SK-N-SH (cell line): ENCODE measurements at regions of chr4 and their contacts with region 1.

Region 1: GRCh38 chr4:42519803-42520417 is 122.6 kb downstream of the SHISA3 start:
- DNase-seq: peak; percentile 25
- H3K4me3 ChIP-seq: no peak overlapping the region
- H3K27ac ChIP-seq: no peak overlapping the region
- H3K4me1 ChIP-seq: peaks cover 0 to under 1% of the 10 kb centered on the region in 2 experiments; a peak in 1 of 4 replicates
- H3K27me3 ChIP-seq: no peaks in the 10 kb centered on the region
- CTCF ChIP-seq: peak; percentile 74
- EP300 ChIP-seq: no peak
- RAD21 ChIP-seq: peak; percentile 93

Region 2: DNA sequence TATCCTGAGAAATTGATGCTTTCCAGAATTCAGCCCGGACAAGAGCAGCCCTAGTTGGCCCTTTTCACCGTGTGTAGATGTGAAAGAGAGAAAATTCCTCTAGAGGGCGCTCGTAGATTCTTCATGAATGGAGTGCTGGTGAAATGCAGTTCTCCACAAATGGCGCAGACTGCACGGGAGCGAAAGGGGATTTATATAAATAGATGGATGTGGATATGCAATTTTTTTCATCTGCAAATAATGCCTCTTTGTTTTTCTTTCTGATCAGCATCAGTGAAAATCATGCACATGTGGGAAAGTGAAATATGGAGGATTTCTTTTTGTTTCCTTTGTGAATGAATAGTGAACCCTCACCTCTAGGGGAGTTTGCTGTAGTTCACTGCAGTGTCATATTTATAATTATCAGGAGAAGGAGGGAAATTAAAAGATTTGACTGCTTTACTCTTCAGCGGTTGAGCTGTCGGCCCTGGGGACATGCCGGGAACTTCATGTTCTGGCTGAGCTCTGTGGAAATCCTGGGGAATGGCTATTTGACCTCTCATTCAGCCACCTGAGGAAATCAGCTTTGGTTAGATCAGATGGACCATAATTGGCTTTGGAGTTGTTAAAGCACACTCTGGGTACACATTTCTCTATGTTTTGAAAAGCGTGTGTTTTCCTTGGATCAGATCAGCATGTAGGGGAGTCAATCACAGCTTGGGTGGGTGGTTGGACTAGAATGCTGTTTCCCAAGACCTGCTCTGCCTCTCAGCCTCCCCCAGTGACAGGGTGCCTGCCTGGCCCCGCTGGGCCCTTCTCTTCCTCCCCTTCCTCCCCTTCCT is 237.6 kb before region 1 on chr4:
- CTCF ChIA-PET with region 1: interaction called, 109 read pairs
- POLR2A ChIA-PET with region 1: interaction called, 3 read pairs
- DNase-seq: peak; percentile 81
- H3K4me3 ChIP-seq: peak overlapping the region in 1 of 2 experiments; percentile 12; a peak in 1 of 4 replicates
- H3K27ac ChIP-seq: peak overlapping the region in 1 of 2 experiments; percentile 36; a peak in 1 of 4 replicates
- H3K4me1 ChIP-seq: peaks cover 0 to 13% of the 10 kb centered on the region in 2 experiments; a peak in 3 of 4 replicates
- H3K27me3 ChIP-seq: no peaks in the 10 kb centered on the region
- CTCF ChIP-seq: peak; percentile 80
- EP300 ChIP-seq: no peak
- RAD21 ChIP-seq: peak; percentile 96

Region 3: DNA sequence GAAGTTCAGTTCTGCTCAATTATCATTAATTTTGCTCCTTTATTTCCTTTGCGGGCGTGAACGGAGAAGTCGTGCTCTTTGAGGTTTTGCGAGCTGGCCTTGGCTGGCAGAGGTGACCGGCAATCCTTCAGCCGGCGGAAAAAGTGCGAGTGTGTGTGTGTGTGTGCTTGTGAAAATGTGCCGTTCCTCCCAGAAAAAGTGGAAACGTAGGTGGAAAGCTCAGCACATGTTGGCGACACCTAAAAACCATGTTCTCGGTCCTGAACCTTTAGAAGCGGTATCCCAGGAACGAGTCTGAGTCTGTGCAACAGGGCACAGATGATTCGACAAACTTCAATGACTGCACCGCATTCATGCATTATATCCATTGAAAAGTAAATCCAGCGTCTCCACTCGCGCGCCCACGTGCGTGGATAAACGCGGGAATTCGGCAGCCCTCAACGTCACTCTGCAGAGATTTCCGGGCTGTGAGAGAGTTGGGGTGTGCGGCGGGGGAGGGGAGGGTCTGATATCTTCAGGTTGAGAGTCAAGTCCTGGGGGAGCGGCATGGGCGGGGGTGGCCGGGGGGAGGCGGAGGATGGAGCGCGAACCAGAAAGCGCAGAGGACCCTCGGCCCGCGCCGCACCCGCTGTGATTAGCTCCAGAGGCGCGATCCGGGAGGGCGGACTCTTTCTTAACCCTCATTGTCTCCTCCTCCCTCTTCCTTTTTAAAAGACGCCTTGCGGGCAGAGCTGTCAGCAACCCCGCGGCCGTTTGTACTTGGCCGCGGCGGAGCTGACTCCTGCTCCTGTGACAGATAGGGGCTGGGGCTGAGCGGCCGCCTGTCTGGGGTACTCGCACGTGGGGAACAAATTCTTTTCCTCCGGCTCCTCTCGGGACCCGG is 122.9 kb before region 1 on chr4 and contains the start of gene SHISA3:
- CTCF ChIA-PET with region 1: interaction called, 53 read pairs
- POLR2A ChIA-PET with region 1: no interaction called
- DNase-seq: peak; percentile 71
- H3K4me3 ChIP-seq: peak within 1 kb of the TSS; percentile 58 to 60
- H3K27ac ChIP-seq: no peak within 1 kb of the TSS
- H3K4me1 ChIP-seq: peaks cover 0 to 21% of the 10 kb centered on the region in 2 experiments; a peak in 2 of 4 replicates
- H3K27me3 ChIP-seq: peaks cover 23% of the 10 kb centered on the region
- CTCF ChIP-seq: no peak
- EP300 ChIP-seq: no peak
- RAD21 ChIP-seq: no peak
- polyA plus RNA-seq, gene SHISA3: 1.1 and 1.6 TPM in 2 replicates

Region 4: GRCh38 chr4:42501624-42502401 is 18.1 kb before region 1 on chr4:
- CTCF ChIA-PET with region 1: interaction called, 13 read pairs
- POLR2A ChIA-PET with region 1: no interaction called
- DNase-seq: no peak
- H3K4me3 ChIP-seq: no peak overlapping the region
- H3K27ac ChIP-seq: peak overlapping the region in 1 of 2 experiments; percentile 71; a peak in 2 of 4 replicates
- H3K4me1 ChIP-seq: peaks cover 0 to 9% of the 10 kb centered on the region in 2 experiments; a peak in 3 of 4 replicates
- H3K27me3 ChIP-seq: no peaks in the 10 kb centered on the region
- CTCF ChIP-seq: no peak
- EP300 ChIP-seq: no peak
- RAD21 ChIP-seq: no peak

Region 5: GRCh38 chr4:42617030-42617429 is 97.1 kb after region 1 on chr4:
- CTCF ChIA-PET with region 1: no interaction called
- POLR2A ChIA-PET with region 1: no interaction called
- DNase-seq: no peak
- H3K4me3 ChIP-seq: no peak overlapping the region
- H3K27ac ChIP-seq: no peak overlapping the region
- H3K4me1 ChIP-seq: no peaks in the 10 kb centered on the region; a peak in 2 of 4 replicates
- H3K27me3 ChIP-seq: no peaks in the 10 kb centered on the region
- CTCF ChIP-seq: no peak
- EP300 ChIP-seq: no peak
- RAD21 ChIP-seq: no peak